A549 (cell line): ENCODE measurements at regions of chr3 and their contacts with region 1.

Region 1: GRCh38 chr3:138923531-138923994 is 23.4 kb downstream of the FOXL2 start:
- DNase-seq: peak; percentile 53 to 84
- ATAC-seq: peak; percentile 90 to 93
- H3K4me3 ChIP-seq: no peak overlapping the region
- H3K27ac ChIP-seq: no peak overlapping the region
- H3K4me1 ChIP-seq: peaks cover 15% of the 10 kb centered on the region
- CTCF ChIP-seq: peak; percentile 72
- EP300 ChIP-seq: no peak
- POLR2A ChIP-seq: no peak
- RAD21 ChIP-seq: peak; percentile 73 to 81

Region 2: DNA sequence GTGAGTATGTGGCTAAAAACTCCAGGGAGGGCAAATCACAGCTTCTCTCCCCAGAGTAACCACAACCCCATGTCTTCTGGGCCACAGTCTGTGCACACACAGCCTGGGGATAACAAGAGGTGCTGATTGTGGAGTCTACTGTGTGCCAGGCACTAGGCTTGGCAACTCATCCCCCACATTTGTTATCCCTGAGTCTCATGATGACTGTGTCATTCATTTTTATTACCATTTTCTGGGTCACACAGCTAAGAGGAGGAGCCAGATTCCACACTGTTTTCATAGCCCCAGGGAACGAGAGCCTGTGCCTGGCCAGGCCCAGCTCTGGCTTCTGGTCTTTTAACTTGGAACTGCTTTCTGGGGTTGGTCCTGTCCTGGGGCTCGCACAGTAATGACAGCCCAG is 454.7 kb before region 1 on chr3:
- CTCF ChIA-PET with region 1: interaction called, 10 read pairs
- POLR2A ChIA-PET with region 1: no interaction called
- DNase-seq: no peak
- ATAC-seq: no peak; a peak in 1 of 6 replicates
- H3K4me3 ChIP-seq: no peak overlapping the region
- H3K27ac ChIP-seq: no peak overlapping the region
- H3K4me1 ChIP-seq: no peaks in the 10 kb centered on the region; the same call in 2 of the 3 replicates
- CTCF ChIP-seq: no peak
- EP300 ChIP-seq: no peak
- POLR2A ChIP-seq: no peak
- RAD21 ChIP-seq: no peak

Region 3: GRCh38 chr3:138625707-138626365 is 297.7 kb before region 1 on chr3:
- CTCF ChIA-PET with region 1: interaction called, 12 read pairs
- POLR2A ChIA-PET with region 1: no interaction called
- DNase-seq: no peak
- ATAC-seq: peak; percentile 47 to 59; a peak in 2 of 6 replicates
- H3K4me3 ChIP-seq: no peak overlapping the region
- H3K27ac ChIP-seq: no peak overlapping the region
- H3K4me1 ChIP-seq: peaks cover 10% of the 10 kb centered on the region; the same call in 2 of the 3 replicates
- CTCF ChIP-seq: no peak
- EP300 ChIP-seq: no peak
- POLR2A ChIP-seq: no peak
- RAD21 ChIP-seq: no peak

Region 4: GRCh38 chr3:138694287-138695007 is 229.1 kb before region 1 on chr3:
- CTCF ChIA-PET with region 1: interaction called, 143 read pairs
- POLR2A ChIA-PET with region 1: no interaction called
- DNase-seq: peak; percentile 5 to 56
- ATAC-seq: peak; percentile 78 to 82
- H3K4me3 ChIP-seq: no peak overlapping the region
- H3K27ac ChIP-seq: peak overlapping the region; percentile 55 to 73; a peak in 5 of 6 replicates
- H3K4me1 ChIP-seq: peaks cover 22% of the 10 kb centered on the region
- CTCF ChIP-seq: no peak
- EP300 ChIP-seq: no peak; a peak in 1 of 5 replicates
- POLR2A ChIP-seq: no peak
- RAD21 ChIP-seq: no peak

Region 5: DNA sequence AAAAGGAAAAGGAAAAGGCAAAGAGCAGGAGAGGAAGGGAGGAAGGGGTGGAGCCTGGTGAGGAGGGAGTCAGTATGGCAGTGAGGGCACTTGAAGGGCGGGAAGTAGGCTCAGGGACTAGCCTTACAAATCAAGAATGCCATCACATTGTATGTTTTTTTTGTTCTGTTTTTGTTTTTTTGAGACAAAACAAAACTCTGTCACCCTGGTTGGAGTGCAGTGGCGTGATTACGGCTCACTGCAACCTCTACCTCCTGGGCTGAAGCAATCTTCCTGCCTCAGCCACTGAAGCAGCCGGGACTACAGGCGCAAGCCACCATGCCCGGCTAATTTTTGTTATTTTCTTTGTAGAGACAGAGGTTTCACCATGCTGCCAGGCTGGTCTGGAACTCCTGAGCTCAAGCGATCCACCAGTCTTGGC is 78.4 kb before region 1 on chr3:
- CTCF ChIA-PET with region 1: no interaction called
- POLR2A ChIA-PET with region 1: no interaction called
- DNase-seq: no peak
- ATAC-seq: no peak
- H3K4me3 ChIP-seq: no peak overlapping the region
- H3K27ac ChIP-seq: no peak overlapping the region
- H3K4me1 ChIP-seq: no peaks in the 10 kb centered on the region
- CTCF ChIP-seq: no peak
- EP300 ChIP-seq: no peak
- POLR2A ChIP-seq: no peak
- RAD21 ChIP-seq: no peak

Region 6: DNA sequence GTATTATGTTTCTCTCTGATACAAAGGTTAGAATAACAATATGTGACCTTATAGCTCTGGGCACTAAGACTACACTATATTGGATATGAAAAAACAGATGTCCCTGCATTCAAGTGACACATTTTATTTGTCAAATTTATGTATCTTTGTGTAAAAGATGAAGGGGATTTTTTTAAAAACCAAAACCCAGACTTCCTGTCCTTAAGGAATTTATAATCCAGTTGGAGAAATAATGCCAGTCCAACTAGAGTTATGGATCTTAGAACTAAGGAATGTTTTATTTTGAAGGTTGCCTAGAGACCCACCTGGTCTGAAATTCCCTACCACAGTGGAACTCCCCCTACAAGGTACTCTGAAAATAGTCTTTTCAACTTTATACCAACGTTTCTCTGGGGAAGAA is 55.6 kb before region 1 on chr3:
- CTCF ChIA-PET with region 1: no interaction called
- POLR2A ChIA-PET with region 1: no interaction called
- DNase-seq: no peak
- ATAC-seq: no peak
- H3K4me3 ChIP-seq: no peak overlapping the region
- H3K27ac ChIP-seq: no peak overlapping the region
- H3K4me1 ChIP-seq: peaks cover 13% of the 10 kb centered on the region
- CTCF ChIP-seq: no peak
- EP300 ChIP-seq: no peak
- POLR2A ChIP-seq: no peak
- RAD21 ChIP-seq: no peak

Region 7: GRCh38 chr3:139329345-139329850 is 405.8 kb after region 1 on chr3:
- CTCF ChIA-PET with region 1: interaction called, 17 read pairs
- POLR2A ChIA-PET with region 1: no interaction called
- DNase-seq: peak; percentile 82 to 84
- ATAC-seq: peak; percentile 99 to 100
- H3K4me3 ChIP-seq: peak overlapping the region; percentile 34; the same call in 2 of the 3 replicates
- H3K27ac ChIP-seq: peak overlapping the region; percentile 67 to 81
- H3K4me1 ChIP-seq: peaks cover 5% of the 10 kb centered on the region; the same call in 2 of the 3 replicates
- CTCF ChIP-seq: peak; percentile 98
- EP300 ChIP-seq: no peak
- POLR2A ChIP-seq: no peak
- RAD21 ChIP-seq: peak; percentile 97 to 98